Caco-2 (cell line): ENCODE measurements at regions of chr3 and their contacts with region 1.

Region 1: GRCh38 chr3:159804726-159805410 is 183.8 kb upstream of the IL12A start:
- DNase-seq: peak; percentile 84
- H3K4me3 ChIP-seq: no peak overlapping the region
- H3K4me3 Mint-ChIP-seq: no peak overlapping the region
- H3K27ac Mint-ChIP-seq: no peak overlapping the region
- H3K4me1 ChIP-seq: peaks cover 38% of the 10 kb centered on the region
- H3K4me1 Mint-ChIP-seq: peaks cover 12% of the 10 kb centered on the region
- H3K27me3 ChIP-seq: no peaks in the 10 kb centered on the region
- H3K27me3 Mint-ChIP-seq: no peaks in the 10 kb centered on the region
- CTCF ChIP-seq: peak; percentile 84 to 94

Region 2: DNA sequence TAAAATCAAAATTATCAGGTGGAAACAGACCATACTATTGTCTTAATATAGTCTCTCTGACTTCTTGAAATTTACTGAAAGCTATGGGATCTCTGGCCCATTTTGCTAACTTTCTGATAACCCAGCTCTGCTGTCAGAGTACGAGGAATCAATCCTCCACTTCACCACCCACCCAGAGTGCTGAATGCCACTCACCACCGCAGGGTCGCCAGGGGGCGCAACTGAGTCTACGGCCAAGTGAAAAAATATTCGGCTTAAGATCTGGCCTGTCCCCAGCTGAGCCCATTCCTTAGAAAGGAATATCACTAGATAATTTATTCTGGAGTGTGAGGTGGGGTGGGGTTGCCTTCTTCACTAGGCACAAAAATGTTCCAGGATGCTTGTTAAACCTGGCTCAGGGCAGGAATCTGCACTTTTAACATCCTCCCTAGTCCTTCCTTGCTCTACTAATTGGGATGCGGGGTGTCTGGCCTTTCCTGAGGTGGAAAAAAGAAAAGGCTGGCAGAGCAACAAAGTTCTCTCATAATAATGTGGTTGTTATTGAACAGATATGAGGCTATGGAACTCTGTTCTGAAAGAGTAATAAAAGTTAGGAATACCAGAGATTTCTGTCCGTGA is 482.4 kb before region 1 on chr3:
- CTCF ChIA-PET with region 1: no interaction called
- POLR2A ChIA-PET with region 1: no interaction called
- intact Hi-C with region 1: loop called (anchors 2 kb)
- DNase-seq: peak in 1 of 2 experiments; percentile 42
- H3K4me3 ChIP-seq: no peak overlapping the region
- H3K4me3 Mint-ChIP-seq: no peak overlapping the region
- H3K27ac Mint-ChIP-seq: no peak overlapping the region
- H3K4me1 ChIP-seq: no peaks in the 10 kb centered on the region
- H3K4me1 Mint-ChIP-seq: no peaks in the 10 kb centered on the region
- H3K27me3 ChIP-seq: no peaks in the 10 kb centered on the region
- H3K27me3 Mint-ChIP-seq: no peaks in the 10 kb centered on the region
- CTCF ChIP-seq: peak; percentile 37 to 54

Region 3: DNA sequence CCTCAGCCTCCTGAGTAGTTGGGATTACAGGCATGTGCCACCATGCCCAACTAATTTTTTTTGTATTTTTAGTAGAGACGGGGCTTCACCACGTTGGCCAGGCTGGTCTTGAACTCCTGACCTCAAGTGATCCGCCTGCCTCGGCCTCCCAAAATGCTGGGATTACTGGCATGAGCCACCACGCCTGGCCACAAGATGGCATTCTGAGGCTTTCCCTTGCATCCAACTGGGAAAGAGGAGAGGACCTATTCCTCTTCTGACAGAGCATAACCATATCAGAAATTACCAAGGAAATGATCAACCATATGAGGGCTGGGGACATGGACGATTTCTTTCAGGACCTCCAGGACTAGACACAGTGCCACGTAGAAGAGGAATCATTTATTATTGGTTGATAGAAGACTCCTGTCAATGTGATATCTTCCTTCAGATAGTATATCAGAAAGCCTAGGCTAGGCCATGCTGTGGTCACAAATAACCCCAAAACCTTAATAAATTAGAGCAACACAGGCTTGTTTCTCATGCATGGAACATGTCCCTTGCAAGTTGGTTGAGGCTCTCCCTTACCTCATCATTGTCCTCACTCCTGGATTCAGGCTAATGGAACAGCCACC is 188.5 kb before region 1 on chr3:
- CTCF ChIA-PET with region 1: no interaction called
- POLR2A ChIA-PET with region 1: no interaction called
- intact Hi-C with region 1: loop called (anchors 1 kb)
- DNase-seq: peak; percentile 72 to 73
- H3K4me3 ChIP-seq: no peak overlapping the region
- H3K4me3 Mint-ChIP-seq: no peak overlapping the region
- H3K27ac Mint-ChIP-seq: no peak overlapping the region
- H3K4me1 ChIP-seq: peaks cover 6% of the 10 kb centered on the region
- H3K4me1 Mint-ChIP-seq: no peaks in the 10 kb centered on the region
- H3K27me3 ChIP-seq: no peaks in the 10 kb centered on the region
- H3K27me3 Mint-ChIP-seq: no peaks in the 10 kb centered on the region
- CTCF ChIP-seq: peak; percentile 51 to 65

Region 4: GRCh38 chr3:159668990-159669476 is 135.8 kb before region 1 on chr3:
- CTCF ChIA-PET with region 1: no interaction called
- POLR2A ChIA-PET with region 1: no interaction called
- intact Hi-C with region 1: loop called (anchors 5 kb)
- DNase-seq: peak; percentile 72 to 73
- H3K4me3 ChIP-seq: no peak overlapping the region
- H3K4me3 Mint-ChIP-seq: peak overlapping the region; percentile 61
- H3K27ac Mint-ChIP-seq: peak overlapping the region; percentile 90
- H3K4me1 ChIP-seq: peaks cover 60% of the 10 kb centered on the region
- H3K4me1 Mint-ChIP-seq: peaks cover 32% of the 10 kb centered on the region
- H3K27me3 ChIP-seq: no peaks in the 10 kb centered on the region
- H3K27me3 Mint-ChIP-seq: no peaks in the 10 kb centered on the region
- CTCF ChIP-seq: no peak

Region 5: GRCh38 chr3:159724627-159725026 is 80.2 kb before region 1 on chr3:
- CTCF ChIA-PET with region 1: no interaction called
- POLR2A ChIA-PET with region 1: no interaction called
- intact Hi-C with region 1: no loop called
- DNase-seq: no peak
- H3K4me3 ChIP-seq: no peak overlapping the region
- H3K4me3 Mint-ChIP-seq: no peak overlapping the region
- H3K27ac Mint-ChIP-seq: no peak overlapping the region
- H3K4me1 ChIP-seq: peaks cover 14% of the 10 kb centered on the region; the same call in 1 of the 2 replicates
- H3K4me1 Mint-ChIP-seq: peaks cover 6% of the 10 kb centered on the region
- H3K27me3 ChIP-seq: no peaks in the 10 kb centered on the region
- H3K27me3 Mint-ChIP-seq: no peaks in the 10 kb centered on the region
- CTCF ChIP-seq: no peak

Region 6: GRCh38 chr3:159763602-159764489 is 41.0 kb before region 1 on chr3:
- CTCF ChIA-PET with region 1: interaction called, 18 read pairs
- POLR2A ChIA-PET with region 1: no interaction called
- intact Hi-C with region 1: loop called (anchors 1 kb)
- DNase-seq: peak; percentile 91
- H3K4me3 ChIP-seq: peak overlapping the region; percentile 79
- H3K4me3 Mint-ChIP-seq: peak overlapping the region; percentile 87
- H3K27ac Mint-ChIP-seq: peak overlapping the region; percentile 84
- H3K4me1 ChIP-seq: peaks cover 31% of the 10 kb centered on the region
- H3K4me1 Mint-ChIP-seq: peaks cover 28% of the 10 kb centered on the region
- H3K27me3 ChIP-seq: no peaks in the 10 kb centered on the region
- H3K27me3 Mint-ChIP-seq: no peaks in the 10 kb centered on the region
- CTCF ChIP-seq: peak in 1 of 2 experiments; percentile 17

Region 7: GRCh38 chr3:159781867-159782266 is 23.0 kb before region 1 on chr3:
- CTCF ChIA-PET with region 1: interaction called, 84 read pairs
- POLR2A ChIA-PET with region 1: interaction called, 7 read pairs
- intact Hi-C with region 1: loop called (anchors 1 kb)
- DNase-seq: peak in 1 of 2 experiments; percentile 43
- H3K4me3 ChIP-seq: no peak overlapping the region
- H3K4me3 Mint-ChIP-seq: no peak overlapping the region
- H3K27ac Mint-ChIP-seq: peak overlapping the region; percentile 34
- H3K4me1 ChIP-seq: peaks cover 49% of the 10 kb centered on the region
- H3K4me1 Mint-ChIP-seq: peaks cover 42% of the 10 kb centered on the region
- H3K27me3 ChIP-seq: no peaks in the 10 kb centered on the region
- H3K27me3 Mint-ChIP-seq: no peaks in the 10 kb centered on the region
- CTCF ChIP-seq: peak; percentile 45 to 52

Region 8: DNA sequence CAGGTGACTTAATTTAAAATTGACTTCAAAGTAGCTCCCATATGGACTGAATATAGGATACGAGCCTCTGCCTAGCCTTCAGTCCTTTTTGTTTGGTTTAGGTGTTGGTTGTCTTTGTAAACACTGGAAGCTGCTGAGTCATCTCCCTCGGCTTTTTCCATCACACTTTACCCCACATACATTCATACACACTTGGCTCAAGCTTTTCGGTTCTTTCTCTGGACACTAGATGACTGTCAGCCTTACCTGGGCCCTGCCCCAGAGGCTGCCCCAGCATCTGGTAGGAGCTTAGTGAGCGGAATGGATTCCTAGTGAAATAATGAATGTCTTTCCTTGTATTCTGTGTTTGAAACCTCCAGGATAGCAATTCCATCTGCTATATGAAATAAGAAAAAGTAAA is 17.7 kb before region 1 on chr3:
- CTCF ChIA-PET with region 1: interaction called, 84 read pairs
- POLR2A ChIA-PET with region 1: interaction called, 7 read pairs
- intact Hi-C with region 1: loop called (anchors 1 kb)
- DNase-seq: peak; percentile 67 to 78
- H3K4me3 ChIP-seq: no peak overlapping the region
- H3K4me3 Mint-ChIP-seq: peak overlapping the region; percentile 65
- H3K27ac Mint-ChIP-seq: peak overlapping the region; percentile 96
- H3K4me1 ChIP-seq: peaks cover 99% of the 10 kb centered on the region
- H3K4me1 Mint-ChIP-seq: peaks cover 65% of the 10 kb centered on the region
- H3K27me3 ChIP-seq: no peaks in the 10 kb centered on the region
- H3K27me3 Mint-ChIP-seq: no peaks in the 10 kb centered on the region
- CTCF ChIP-seq: no peak

Region 9: DNA sequence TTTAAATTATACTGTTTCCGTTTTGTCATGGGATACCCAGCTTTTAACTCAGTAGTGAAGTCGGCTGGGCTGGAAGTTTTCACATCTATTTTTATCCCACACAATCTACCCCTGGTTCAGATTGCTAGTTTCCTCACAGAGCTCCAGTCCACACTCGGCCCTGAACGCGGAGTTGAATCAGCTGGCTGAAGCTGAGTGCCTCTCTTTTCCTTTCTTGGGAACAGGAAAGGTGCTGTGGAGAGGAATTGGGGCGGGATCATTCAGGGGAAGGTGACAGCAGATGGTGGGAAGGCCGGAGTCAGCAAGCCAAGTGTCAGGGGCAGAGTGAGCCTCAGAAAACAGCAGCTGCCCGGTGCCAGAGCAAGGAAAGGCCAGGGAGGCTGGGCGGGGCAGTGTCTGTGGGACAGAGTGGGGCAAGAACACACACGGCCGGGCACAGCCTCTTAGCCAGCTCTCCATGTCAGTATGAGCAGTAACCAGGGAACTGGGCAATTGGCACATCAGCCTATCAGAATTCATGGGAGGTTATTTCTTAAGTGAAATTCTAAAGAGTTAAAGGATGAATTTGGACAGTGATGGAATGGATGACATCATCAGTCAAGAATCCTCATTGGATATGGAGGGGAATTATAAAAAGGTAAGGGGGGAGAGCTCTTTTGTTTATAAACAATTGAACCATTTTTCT is 48.1 kb after region 1 on chr3:
- CTCF ChIA-PET with region 1: no interaction called
- POLR2A ChIA-PET with region 1: no interaction called
- intact Hi-C with region 1: no loop called
- DNase-seq: no peak
- H3K4me3 ChIP-seq: no peak overlapping the region
- H3K4me3 Mint-ChIP-seq: no peak overlapping the region
- H3K27ac Mint-ChIP-seq: peak overlapping the region; percentile 9
- H3K4me1 ChIP-seq: peaks cover 46% of the 10 kb centered on the region
- H3K4me1 Mint-ChIP-seq: peaks cover 20% of the 10 kb centered on the region
- H3K27me3 ChIP-seq: no peaks in the 10 kb centered on the region
- H3K27me3 Mint-ChIP-seq: no peaks in the 10 kb centered on the region
- CTCF ChIP-seq: no peak

Region 10: GRCh38 chr3:159964166-159964973 is 159.5 kb after region 1 on chr3:
- CTCF ChIA-PET with region 1: no interaction called
- POLR2A ChIA-PET with region 1: no interaction called
- intact Hi-C with region 1: no loop called
- DNase-seq: no peak
- H3K4me3 ChIP-seq: no peak overlapping the region
- H3K4me3 Mint-ChIP-seq: no peak overlapping the region
- H3K27ac Mint-ChIP-seq: peak overlapping the region; percentile 76
- H3K4me1 ChIP-seq: peaks cover 7% of the 10 kb centered on the region; the same call in 1 of the 2 replicates
- H3K4me1 Mint-ChIP-seq: peaks cover 15% of the 10 kb centered on the region
- H3K27me3 ChIP-seq: no peaks in the 10 kb centered on the region
- H3K27me3 Mint-ChIP-seq: no peaks in the 10 kb centered on the region
- CTCF ChIP-seq: no peak